Activated CD4-positive, alpha-beta memory T cell treated with anti-CD3 and anti-CD28 coated beads, Interleukin-2, amount 10 ng/mL, durations not matched to agents 7 days and 5 days (primary cell): ENCODE measurements at regions of chr22 and their contacts with region 1.

Region 1: DNA sequence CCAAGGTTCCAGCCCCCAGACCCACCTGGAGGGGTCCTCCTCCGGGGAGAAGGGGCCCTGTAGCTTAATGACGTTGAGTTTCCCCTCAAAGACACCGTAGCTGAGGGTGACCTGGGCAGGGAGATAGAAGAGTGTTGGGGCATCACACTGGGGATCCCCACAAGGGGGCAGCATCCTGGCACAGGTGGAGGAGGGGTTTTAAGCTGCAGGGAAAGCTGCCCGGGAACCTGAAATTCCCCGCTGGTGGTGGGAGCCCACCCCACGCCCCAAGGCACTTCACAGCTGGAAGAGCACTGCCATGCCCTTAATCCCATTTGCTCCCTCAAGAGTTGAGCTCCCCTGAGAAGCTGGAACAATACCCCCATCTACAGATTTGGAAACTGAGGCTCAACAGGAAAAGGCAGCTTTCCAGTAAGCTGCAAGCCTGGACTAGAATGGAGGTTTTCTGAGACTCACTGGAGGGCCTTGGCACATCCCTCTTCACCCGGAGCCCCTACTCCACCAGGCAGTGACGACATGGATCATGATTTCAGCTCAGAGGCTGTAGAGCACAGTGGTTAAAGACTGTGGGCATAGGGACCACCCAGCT is 13.7 kb downstream of the MFNG start:
- DNase-seq: peak; percentile 48
- H3K4me3 Mint-ChIP-seq: no peak overlapping the region
- H3K27ac Mint-ChIP-seq: peak overlapping the region; percentile 21
- H3K4me1 Mint-ChIP-seq: peaks cover 9% of the 10 kb centered on the region
- H3K27me3 Mint-ChIP-seq: no peaks in the 10 kb centered on the region

Region 2: GRCh38 chr22:37457093-37457893 is 15.2 kb before region 1 on chr22:
- CTCF ChIA-PET with region 1: interaction called, 14 read pairs
- POLR2A ChIA-PET with region 1: no interaction called
- DNase-seq: peak; percentile 87
- H3K4me3 Mint-ChIP-seq: no peak overlapping the region
- H3K27ac Mint-ChIP-seq: no peak overlapping the region
- H3K4me1 Mint-ChIP-seq: peaks cover 4% of the 10 kb centered on the region
- H3K27me3 Mint-ChIP-seq: no peaks in the 10 kb centered on the region

Region 3: GRCh38 chr22:37486224-37486845 is 13.8 kb after region 1 on chr22 and contains the start of gene MFNG:
- CTCF ChIA-PET with region 1: interaction called, 27 read pairs
- POLR2A ChIA-PET with region 1: interaction called, 31 read pairs
- DNase-seq: peak; percentile 82
- H3K4me3 Mint-ChIP-seq: peak within 1 kb of the TSS; percentile 98
- H3K27ac Mint-ChIP-seq: peak within 1 kb of the TSS; percentile 94
- H3K4me1 Mint-ChIP-seq: peaks cover 56% of the 10 kb centered on the region
- H3K27me3 Mint-ChIP-seq: no peaks in the 10 kb centered on the region
- total RNA-seq, gene MFNG: 200 to 203 TPM

Region 4: DNA sequence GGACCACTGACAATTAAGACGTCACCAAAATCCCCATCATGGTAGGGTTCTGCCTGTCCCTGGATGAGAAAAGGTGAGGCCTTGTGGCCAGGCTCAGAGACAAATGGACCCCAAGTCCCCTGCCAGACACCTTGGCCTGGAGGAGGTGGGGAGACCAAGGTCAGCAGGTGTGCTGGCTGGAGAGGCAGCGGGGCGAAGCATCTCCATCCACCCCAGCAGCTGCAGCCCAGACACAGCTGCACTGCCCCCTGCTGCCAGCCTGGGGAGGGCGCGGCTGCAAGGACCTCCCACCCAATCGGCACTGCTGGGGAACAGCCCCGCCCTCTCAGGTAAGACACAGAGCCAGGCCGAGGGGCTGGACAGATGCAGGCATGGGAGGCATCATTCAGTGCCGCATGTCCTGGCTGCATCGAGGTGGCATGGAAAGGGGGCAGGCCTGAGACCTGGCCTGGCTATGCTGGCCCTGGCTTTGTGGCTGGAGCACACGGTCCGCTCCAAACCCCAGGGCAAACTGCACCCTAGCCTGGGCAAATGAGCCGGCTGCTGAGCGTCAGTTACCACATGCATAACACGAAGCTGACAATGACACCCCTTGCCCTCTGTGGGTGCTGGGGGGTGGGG is 25.9 kb after region 1 on chr22:
- CTCF ChIA-PET with region 1: interaction called, 18 read pairs
- POLR2A ChIA-PET with region 1: no interaction called
- DNase-seq: peak; percentile 75
- H3K4me3 Mint-ChIP-seq: no peak overlapping the region
- H3K27ac Mint-ChIP-seq: no peak overlapping the region
- H3K4me1 Mint-ChIP-seq: peaks cover 12% of the 10 kb centered on the region
- H3K27me3 Mint-ChIP-seq: peaks cover 18% of the 10 kb centered on the region

Region 5: GRCh38 chr22:37566903-37567820 is 94.7 kb after region 1 on chr22:
- CTCF ChIA-PET with region 1: interaction called, 26 read pairs
- POLR2A ChIA-PET with region 1: interaction called, 7 read pairs
- DNase-seq: peak; percentile 97
- H3K4me3 Mint-ChIP-seq: peak overlapping the region; percentile 54
- H3K27ac Mint-ChIP-seq: peak overlapping the region; percentile 79
- H3K4me1 Mint-ChIP-seq: peaks cover 27% of the 10 kb centered on the region
- H3K27me3 Mint-ChIP-seq: peaks cover 43% of the 10 kb centered on the region